ENCODE measurements at regions of chr9 and their contacts with region 1.

Region 1: GRCh38 chr9:130128733-130129431 is 43.3 kb upstream of the NCS1 start:
- DNase-seq: peak; percentile 76
- H3K4me3 Mint-ChIP-seq: peak overlapping the region; percentile 71
- H3K27ac Mint-ChIP-seq: peak overlapping the region; percentile 99
- H3K4me1 Mint-ChIP-seq: peaks cover 52% of the 10 kb centered on the region
- H3K27me3 Mint-ChIP-seq: no peaks in the 10 kb centered on the region

Region 2: GRCh38 chr9:130159915-130160670 is 31.2 kb after region 1 on chr9:
- CTCF ChIA-PET with region 1: interaction called, 4 read pairs
- intact Hi-C with region 1: loop called (anchors 2 kb)
- DNase-seq: peak; percentile 19
- H3K4me3 Mint-ChIP-seq: no peak overlapping the region
- H3K27ac Mint-ChIP-seq: peak overlapping the region; percentile 66
- H3K4me1 Mint-ChIP-seq: peaks cover 9% of the 10 kb centered on the region
- H3K27me3 Mint-ChIP-seq: no peaks in the 10 kb centered on the region

Measured in activated naive CD4-positive, alpha-beta T cell treated with anti-CD3 and anti-CD28 coated beads for 36 hours (primary cell).